Naive thymus-derived CD4-positive, alpha-beta T cell (primary cell): ENCODE measurements at regions of chr1 and their contacts with region 1.

Region 1: DNA sequence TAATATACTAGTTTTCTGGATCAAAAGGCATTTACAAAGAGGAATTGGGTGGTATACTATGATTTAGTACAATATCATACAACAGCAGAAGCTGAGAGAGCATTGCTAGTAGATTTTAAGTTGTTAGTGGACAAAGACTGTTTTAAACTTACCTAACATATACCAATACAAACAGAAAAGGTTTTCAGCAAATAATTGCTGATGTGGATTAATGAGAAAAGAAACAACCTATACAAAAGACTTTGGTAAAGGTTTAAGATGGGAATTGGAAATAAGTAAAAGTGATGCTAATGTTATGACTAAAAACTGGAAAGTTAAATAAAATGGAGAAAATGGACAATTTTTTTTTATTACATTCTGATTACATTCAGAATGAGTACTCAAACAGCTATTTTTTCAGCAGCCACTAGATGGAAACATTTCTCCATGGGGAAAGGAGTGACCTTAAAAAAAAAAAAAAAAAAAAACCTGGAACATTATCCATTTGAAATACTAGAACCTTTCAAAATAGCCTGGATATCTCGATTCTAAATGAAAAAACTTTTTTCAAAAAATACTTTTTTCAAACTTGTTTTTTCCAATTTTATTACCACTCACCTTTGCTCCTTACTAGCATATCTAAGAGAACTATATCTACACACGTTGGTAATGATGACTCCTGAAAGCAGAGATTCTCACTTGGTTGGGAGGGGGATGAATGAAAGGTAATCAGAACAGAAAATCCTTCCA is 55.4 kb downstream of the EPRS1 start:
- DNase-seq: peak in 1 of 9 donors; percentile 3
- ATAC-seq: no peak
- H3K4me3 ChIP-seq: no peak overlapping the region
- H3K4me3 Mint-ChIP-seq: no peak overlapping the region
- H3K27ac ChIP-seq: no peak overlapping the region
- H3K27ac Mint-ChIP-seq: peak overlapping the region in 2 of 9 donors; percentile 2 to 7
- H3K4me1 ChIP-seq: no peaks in the 10 kb centered on the region
- H3K4me1 Mint-ChIP-seq: peaks cover 0 to 4% (median 0%) of the 10 kb centered on the region in 7 donors
- H3K27me3 ChIP-seq: no peaks in the 10 kb centered on the region
- H3K27me3 Mint-ChIP-seq: no peaks in the 10 kb centered on the region

Region 2: GRCh38 chr1:220028346-220028895 is 37.5 kb after region 1 on chr1:
- CTCF ChIA-PET with region 1: interaction called, 5 read pairs
- POLR2A ChIA-PET with region 1: no interaction called
- intact Hi-C with region 1: loop called in 1 of 2 experiments (anchors 5 kb)
- DNase-seq: no peak
- ATAC-seq: no peak
- H3K4me3 ChIP-seq: no peak overlapping the region
- H3K4me3 Mint-ChIP-seq: no peak overlapping the region
- H3K27ac ChIP-seq: no peak overlapping the region
- H3K27ac Mint-ChIP-seq: peak overlapping the region in 1 of 9 donors; percentile 14
- H3K4me1 ChIP-seq: no peaks in the 10 kb centered on the region
- H3K4me1 Mint-ChIP-seq: peaks cover 0 to 7% (median 0%) of the 10 kb centered on the region in 7 donors
- H3K27me3 ChIP-seq: no peaks in the 10 kb centered on the region
- H3K27me3 Mint-ChIP-seq: no peaks in the 10 kb centered on the region

Region 3: GRCh38 chr1:220076861-220077762 is 86.2 kb after region 1 on chr1:
- CTCF ChIA-PET with region 1: no interaction called
- POLR2A ChIA-PET with region 1: no interaction called
- intact Hi-C with region 1: no loop called
- DNase-seq: no peak
- ATAC-seq: no peak
- H3K4me3 ChIP-seq: no peak overlapping the region
- H3K4me3 Mint-ChIP-seq: no peak overlapping the region
- H3K27ac ChIP-seq: no peak overlapping the region
- H3K27ac Mint-ChIP-seq: no peak overlapping the region
- H3K4me1 ChIP-seq: no peaks in the 10 kb centered on the region
- H3K4me1 Mint-ChIP-seq: peaks cover 0 to 13% (median 7%) of the 10 kb centered on the region in 7 donors
- H3K27me3 ChIP-seq: no peaks in the 10 kb centered on the region
- H3K27me3 Mint-ChIP-seq: no peaks in the 10 kb centered on the region

Region 4: DNA sequence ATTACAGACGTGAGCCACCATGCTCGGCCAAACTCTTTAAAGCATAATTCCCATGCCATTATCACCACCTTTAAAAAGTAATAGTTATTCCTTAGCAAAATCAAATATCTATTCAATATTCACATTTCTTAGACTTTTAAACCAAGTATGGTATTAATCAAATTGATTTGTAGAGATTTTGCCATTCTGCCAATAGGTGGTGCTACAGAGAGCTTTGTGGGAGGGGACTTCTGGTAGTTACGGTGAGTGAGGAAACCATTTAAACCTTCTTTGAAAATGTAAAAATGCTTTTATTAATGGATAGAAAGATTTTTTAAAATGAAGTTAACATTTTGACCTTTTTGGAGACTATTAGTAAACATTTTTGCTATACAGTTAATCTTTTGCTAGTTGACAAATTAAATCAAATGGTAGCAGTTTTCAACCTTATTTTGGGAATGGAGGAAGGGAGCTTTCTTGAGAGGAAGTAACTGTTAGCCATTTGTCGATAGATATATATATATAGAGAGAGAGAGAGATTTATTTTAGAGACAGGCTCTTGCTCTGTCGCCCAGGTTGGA is 122.3 kb after region 1 on chr1:
- CTCF ChIA-PET with region 1: no interaction called
- POLR2A ChIA-PET with region 1: no interaction called
- intact Hi-C with region 1: loop called (anchors 5 to 10 kb)
- DNase-seq: peak in 7 of 9 donors; percentile 16 to 51 (median 30)
- ATAC-seq: peak; percentile 86
- H3K4me3 ChIP-seq: no peak overlapping the region
- H3K4me3 Mint-ChIP-seq: peak overlapping the region in 6 of 10 donors; percentile 2 to 57 (median 28)
- H3K27ac ChIP-seq: no peak overlapping the region
- H3K27ac Mint-ChIP-seq: peak overlapping the region in 2 of 9 donors; percentile 6 to 72
- H3K4me1 ChIP-seq: no peaks in the 10 kb centered on the region
- H3K4me1 Mint-ChIP-seq: peaks cover 0 to 10% (median 5%) of the 10 kb centered on the region in 7 donors
- H3K27me3 ChIP-seq: no peaks in the 10 kb centered on the region
- H3K27me3 Mint-ChIP-seq: no peaks in the 10 kb centered on the region

Region 5: GRCh38 chr1:220235462-220235861 is 244.5 kb after region 1 on chr1:
- CTCF ChIA-PET with region 1: no interaction called
- POLR2A ChIA-PET with region 1: no interaction called
- intact Hi-C with region 1: no loop called
- DNase-seq: no peak
- ATAC-seq: no peak
- H3K4me3 ChIP-seq: no peak overlapping the region
- H3K4me3 Mint-ChIP-seq: no peak overlapping the region
- H3K27ac ChIP-seq: no peak overlapping the region
- H3K27ac Mint-ChIP-seq: no peak overlapping the region
- H3K4me1 ChIP-seq: no peaks in the 10 kb centered on the region
- H3K4me1 Mint-ChIP-seq: peaks cover 0 to 40% (median 25%) of the 10 kb centered on the region in 7 donors
- H3K27me3 ChIP-seq: no peaks in the 10 kb centered on the region
- H3K27me3 Mint-ChIP-seq: no peaks in the 10 kb centered on the region